ENCODE measurements at regions of chr12 and their contacts with region 1.

Region 1: GRCh38 chr12:104877123-104877705 is 80.9 kb downstream of the SLC41A2 start:
- DNase-seq: peak in 2 of 3 donors; percentile 32 to 35
- H3K4me3 ChIP-seq: no peak overlapping the region
- H3K4me3 Mint-ChIP-seq: no peak overlapping the region
- H3K27ac ChIP-seq: no peak overlapping the region
- H3K27ac Mint-ChIP-seq: no peak overlapping the region
- H3K4me1 ChIP-seq: peaks cover 3 to 7% of the 10 kb centered on the region in 2 donors
- H3K4me1 Mint-ChIP-seq: peaks cover 10% of the 10 kb centered on the region
- H3K27me3 ChIP-seq: no peaks in the 10 kb centered on the region
- H3K27me3 Mint-ChIP-seq: peaks cover 0 to 1% (median 0%) of the 10 kb centered on the region in 3 donors
- CTCF ChIP-seq: peak; percentile 64

Region 2: GRCh38 chr12:104381731-104382480 is 495.3 kb before region 1 on chr12:
- intact Hi-C with region 1: loop called (anchors 5 kb)
- DNase-seq: peak; percentile 67 to 78 (median 74)
- H3K4me3 ChIP-seq: no peak overlapping the region
- H3K4me3 Mint-ChIP-seq: peak overlapping the region in 1 of 2 donors; percentile 54
- H3K27ac ChIP-seq: no peak overlapping the region
- H3K27ac Mint-ChIP-seq: peak overlapping the region in 2 of 7 donors; percentile 17 to 31
- H3K4me1 ChIP-seq: peaks cover 0 to 8% of the 10 kb centered on the region in 2 donors
- H3K4me1 Mint-ChIP-seq: peaks cover 7% of the 10 kb centered on the region
- H3K27me3 ChIP-seq: no peaks in the 10 kb centered on the region
- H3K27me3 Mint-ChIP-seq: peaks cover 1 to 3% (median 2%) of the 10 kb centered on the region in 3 donors
- CTCF ChIP-seq: peak; percentile 88

Region 3: GRCh38 chr12:104805186-104805585 is 72.0 kb before region 1 on chr12:
- intact Hi-C with region 1: no loop called
- DNase-seq: no peak
- H3K4me3 ChIP-seq: no peak overlapping the region
- H3K4me3 Mint-ChIP-seq: no peak overlapping the region
- H3K27ac ChIP-seq: no peak overlapping the region
- H3K27ac Mint-ChIP-seq: peak overlapping the region in 1 of 7 donors; percentile 25
- H3K4me1 ChIP-seq: peaks cover 0 to 2% of the 10 kb centered on the region in 2 donors
- H3K4me1 Mint-ChIP-seq: peaks cover 12% of the 10 kb centered on the region
- H3K27me3 ChIP-seq: peaks cover 0 to 3% of the 10 kb centered on the region in 2 donors
- H3K27me3 Mint-ChIP-seq: no peaks in the 10 kb centered on the region
- CTCF ChIP-seq: no peak

Region 4: GRCh38 chr12:105235732-105236476 is 358.7 kb after region 1 on chr12 and contains the start of gene APPL2:
- intact Hi-C with region 1: no loop called
- DNase-seq: peak; percentile 82 to 92 (median 88)
- H3K4me3 ChIP-seq: peak within 1 kb of the TSS; percentile 78 to 97 (median 91)
- H3K4me3 Mint-ChIP-seq: peak within 1 kb of the TSS; percentile 86 to 95
- H3K27ac ChIP-seq: peak within 1 kb of the TSS; percentile 58 to 86
- H3K27ac Mint-ChIP-seq: peak within 1 kb of the TSS; percentile 78 to 92 (median 88)
- H3K4me1 ChIP-seq: peaks cover 19 to 31% of the 10 kb centered on the region in 2 donors
- H3K4me1 Mint-ChIP-seq: peaks cover 29% of the 10 kb centered on the region
- H3K27me3 ChIP-seq: no peaks in the 10 kb centered on the region
- H3K27me3 Mint-ChIP-seq: peaks cover 1 to 4% (median 2%) of the 10 kb centered on the region in 3 donors
- CTCF ChIP-seq: peak; percentile 46
- polyA plus RNA-seq, gene APPL2: 6.4 to 19.8 (median 9.0) TPM